IMR-90 (cell line): ENCODE measurements at regions of chr11 and their contacts with region 1.

Region 1: GRCh38 chr11:123956752-123957151 is 13.1 kb upstream of the OR6T1 start:
- DNase-seq: no peak
- ATAC-seq: no peak
- H3K4me3 ChIP-seq: no peak overlapping the region
- H3K27ac ChIP-seq: no peak overlapping the region
- H3K4me1 ChIP-seq: no peaks in the 10 kb centered on the region
- H3K27me3 ChIP-seq: no peaks in the 10 kb centered on the region
- CTCF ChIP-seq: no peak
- POLR2A ChIP-seq: no peak
- RAD21 ChIP-seq: no peak

Region 2: GRCh38 chr11:123905826-123906225 is 50.9 kb before region 1 on chr11:
- CTCF ChIA-PET with region 1: no interaction called
- POLR2A ChIA-PET with region 1: no interaction called
- dilution Hi-C with region 1: no loop called
- in situ Hi-C with region 1: no loop called
- intact Hi-C with region 1: loop called (anchors 5 kb)
- DNase-seq: no peak
- ATAC-seq: no peak
- H3K4me3 ChIP-seq: no peak overlapping the region
- H3K27ac ChIP-seq: no peak overlapping the region
- H3K4me1 ChIP-seq: no peaks in the 10 kb centered on the region
- H3K27me3 ChIP-seq: no peaks in the 10 kb centered on the region
- CTCF ChIP-seq: no peak
- POLR2A ChIP-seq: no peak
- RAD21 ChIP-seq: no peak

Region 3: DNA sequence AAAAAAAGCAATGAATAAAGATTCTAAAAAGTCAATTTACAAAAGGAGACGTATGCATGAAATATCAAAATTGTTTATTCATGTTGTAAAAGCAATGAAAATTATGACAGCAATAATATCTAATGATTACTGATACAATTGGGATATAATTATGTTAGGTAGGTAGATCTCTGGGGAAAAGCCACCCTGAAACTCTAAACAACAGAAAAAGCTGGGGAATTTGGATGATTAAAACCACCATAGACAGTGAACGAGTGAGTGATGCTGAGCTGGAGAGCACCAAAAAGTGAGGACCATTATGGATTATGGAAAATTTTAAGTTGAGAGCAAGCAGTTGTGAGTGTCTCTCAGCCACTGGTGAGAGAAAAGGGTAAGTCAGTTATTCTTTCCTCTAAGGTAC is 69.7 kb after region 1 on chr11 and contains the start of gene OR10G8:
- CTCF ChIA-PET with region 1: no interaction called
- POLR2A ChIA-PET with region 1: no interaction called
- dilution Hi-C with region 1: no loop called
- in situ Hi-C with region 1: no loop called
- intact Hi-C with region 1: no loop called
- DNase-seq: no peak
- ATAC-seq: no peak
- H3K4me3 ChIP-seq: no peak within 1 kb of the TSS
- H3K27ac ChIP-seq: no peak within 1 kb of the TSS
- H3K4me1 ChIP-seq: no peaks in the 10 kb centered on the region
- H3K27me3 ChIP-seq: no peaks in the 10 kb centered on the region
- CTCF ChIP-seq: no peak
- POLR2A ChIP-seq: no peak
- RAD21 ChIP-seq: no peak
- total RNA-seq, gene OR10G8: not detected in 2 replicates